H1 (cell line): ENCODE measurements at regions of chr2 and their contacts with region 1.

Region 1: GRCh38 chr2:44342854-44343253 is 18.4 kb downstream of the PREPL start:
- DNase-seq: no peak
- H3K4me3 ChIP-seq: no peak overlapping the region
- H3K27ac ChIP-seq: no peak overlapping the region
- H3K4me1 ChIP-seq: no peaks in the 10 kb centered on the region
- H3K27me3 ChIP-seq: no peaks in the 10 kb centered on the region
- CTCF ChIP-seq: peak in 2 of 3 experiments; percentile 30 to 40; a peak in 3 of 4 replicates
- EP300 ChIP-seq: no peak
- POLR2A ChIP-seq: no peak
- RAD21 ChIP-seq: peak; percentile 64 to 68

Region 2: GRCh38 chr2:44354761-44355160 is 11.9 kb after region 1 on chr2:
- CTCF ChIA-PET with region 1: interaction called, 11 read pairs
- POLR2A ChIA-PET with region 1: interaction called, 8 read pairs
- DNase-seq: no peak
- H3K4me3 ChIP-seq: no peak overlapping the region
- H3K27ac ChIP-seq: no peak overlapping the region
- H3K4me1 ChIP-seq: 0 out of 7 replicates have a peak, but pooled peaks cover 0 to 2% (median 0%) of the 10 kb centered on the region in 4 experiments
- H3K27me3 ChIP-seq: no peaks in the 10 kb centered on the region
- CTCF ChIP-seq: no peak
- EP300 ChIP-seq: no peak
- POLR2A ChIP-seq: no peak
- RAD21 ChIP-seq: no peak